ENCODE measurements at regions of chr1 and their contacts with region 1.

Region 1: GRCh38 chr1:16167331-16168143 is 11.7 kb upstream of the EPHA2 start:
- DNase-seq: peak; percentile 89
- ATAC-seq: peak; percentile 80
- H3K4me3 Mint-ChIP-seq: peak overlapping the region; percentile 69
- H3K27ac Mint-ChIP-seq: no peak overlapping the region
- H3K4me1 Mint-ChIP-seq: peaks cover 48% of the 10 kb centered on the region
- H3K27me3 Mint-ChIP-seq: no peaks in the 10 kb centered on the region
- CTCF ChIP-seq: no peak

Region 2: GRCh38 chr1:16146279-16147155 is 21.0 kb before region 1 on chr1:
- CTCF ChIA-PET with region 1: interaction called, 16 read pairs
- POLR2A ChIA-PET with region 1: interaction called, 4 read pairs
- DNase-seq: peak; percentile 89
- ATAC-seq: peak; percentile 71
- H3K4me3 Mint-ChIP-seq: peak overlapping the region; percentile 52
- H3K27ac Mint-ChIP-seq: peak overlapping the region; percentile 99
- H3K4me1 Mint-ChIP-seq: peaks cover 56% of the 10 kb centered on the region
- H3K27me3 Mint-ChIP-seq: no peaks in the 10 kb centered on the region
- CTCF ChIP-seq: no peak

Region 3: GRCh38 chr1:16155532-16156410 is 11.8 kb before region 1 on chr1 and contains the start of gene EPHA2:
- CTCF ChIA-PET with region 1: interaction called, 14 read pairs
- POLR2A ChIA-PET with region 1: interaction called, 8 read pairs
- DNase-seq: peak; percentile 97
- ATAC-seq: peak; percentile 74
- H3K4me3 Mint-ChIP-seq: peak within 1 kb of the TSS; percentile 86
- H3K27ac Mint-ChIP-seq: peak within 1 kb of the TSS; percentile 94
- H3K4me1 Mint-ChIP-seq: peaks cover 45% of the 10 kb centered on the region
- H3K27me3 Mint-ChIP-seq: no peaks in the 10 kb centered on the region
- CTCF ChIP-seq: no peak
- total RNA-seq, gene EPHA2: 31.4 to 44.4 TPM (median 31.7 TPM) in 3 replicates

Region 4: GRCh38 chr1:16236511-16237342 is 69.2 kb after region 1 on chr1 and contains the start of gene CPLANE2:
- CTCF ChIA-PET with region 1: no interaction called
- POLR2A ChIA-PET with region 1: no interaction called
- DNase-seq: peak; percentile 97
- ATAC-seq: peak; percentile 88
- H3K4me3 Mint-ChIP-seq: peak within 1 kb of the TSS; percentile 80
- H3K27ac Mint-ChIP-seq: 0 out of 2 replicates have a peak within 1 kb of the TSS, but pooled peaks have one; percentile 68
- H3K4me1 Mint-ChIP-seq: peaks cover 15% of the 10 kb centered on the region
- H3K27me3 Mint-ChIP-seq: no peaks in the 10 kb centered on the region; the same call in 1 of the 2 replicates
- CTCF ChIP-seq: no peak
- total RNA-seq, gene CPLANE2: 3.9 to 5.0 TPM (median 4.9 TPM) in 3 replicates

Measured in WTC11 (cell line).